AG04450 (cell line): ENCODE measurements at regions of chr16 and their contacts with region 1.

Region 1: DNA sequence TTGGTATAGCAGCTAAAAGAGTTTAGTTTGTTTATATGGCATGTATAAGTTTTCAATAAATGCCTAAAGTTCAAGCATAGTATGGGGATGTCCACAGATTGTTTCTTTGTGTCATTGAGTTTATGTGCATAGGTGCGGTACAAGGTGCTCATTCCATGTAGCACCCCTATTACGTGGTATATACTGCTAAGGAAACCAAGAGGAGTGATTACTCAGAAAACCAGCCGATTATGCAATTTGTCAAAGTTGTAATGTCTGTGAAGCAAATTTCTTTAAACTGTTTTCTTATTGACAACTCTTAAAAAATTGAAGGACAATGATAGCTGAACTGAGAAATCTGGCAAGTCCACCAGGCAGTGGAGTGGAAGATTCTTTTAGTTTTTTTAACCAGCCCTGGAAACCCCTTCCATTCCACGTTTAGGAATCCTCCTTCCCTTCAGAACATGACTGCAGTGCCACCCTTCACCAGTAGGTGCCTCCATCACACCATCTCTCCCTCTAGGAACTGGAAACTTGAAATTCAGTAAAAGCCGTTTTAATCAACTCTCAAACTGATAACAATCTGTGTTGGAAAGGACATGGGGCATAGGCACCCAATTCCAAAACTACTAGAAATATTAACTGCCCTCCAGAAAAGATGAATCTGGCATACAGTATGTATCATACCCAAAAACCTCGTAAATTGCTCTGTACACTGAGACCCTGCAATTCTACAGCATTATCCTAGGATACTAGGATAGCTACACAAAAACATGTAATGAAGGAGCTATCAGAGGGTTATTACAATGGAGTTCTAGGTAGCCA is 43.5 kb downstream of the REXO5 start:
- DNase-seq: peak; percentile 41
- H3K4me3 ChIP-seq: no peak overlapping the region
- H3K27ac ChIP-seq: no peak overlapping the region
- H3K27me3 ChIP-seq: no peaks in the 10 kb centered on the region
- CTCF ChIP-seq: peak; percentile 100

Region 2: GRCh38 chr16:20763461-20764232 is 86.1 kb before region 1 on chr16 and contains the start of gene ACSM3:
- CTCF ChIA-PET with region 1: no interaction called
- POLR2A ChIA-PET with region 1: no interaction called
- DNase-seq: peak; percentile 59
- H3K4me3 ChIP-seq: peak within 1 kb of the TSS; percentile 63
- H3K27ac ChIP-seq: no peak within 1 kb of the TSS
- H3K27me3 ChIP-seq: no peaks in the 10 kb centered on the region
- CTCF ChIP-seq: no peak
- polyA plus RNA-seq, gene ACSM3: 0.45 and 0.76 TPM in 2 replicates

Region 3: DNA sequence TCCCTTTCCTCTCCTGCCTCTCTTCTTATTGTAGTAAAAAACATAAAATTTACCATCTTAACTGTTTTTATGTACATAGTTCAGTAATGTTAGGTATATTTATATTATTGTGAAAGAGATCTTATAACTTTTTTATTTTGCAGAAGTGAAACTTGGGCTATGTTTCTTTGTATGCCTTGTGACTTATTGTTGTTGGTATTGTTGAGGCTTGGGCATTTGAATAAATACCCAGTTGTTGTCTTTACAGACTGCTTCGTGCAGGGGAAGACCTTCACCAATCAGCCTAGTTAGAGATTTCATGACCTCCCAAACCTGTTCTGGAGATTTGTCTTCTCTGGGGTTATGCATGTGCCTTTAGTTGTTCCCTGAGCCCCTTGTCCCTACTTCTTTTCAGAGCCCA is 11.5 kb before region 1 on chr16:
- CTCF ChIA-PET with region 1: interaction called, 10 read pairs
- POLR2A ChIA-PET with region 1: no interaction called
- DNase-seq: no peak
- H3K4me3 ChIP-seq: no peak overlapping the region
- H3K27ac ChIP-seq: no peak overlapping the region
- H3K27me3 ChIP-seq: no peaks in the 10 kb centered on the region
- CTCF ChIP-seq: no peak

Region 4: GRCh38 chr16:20900299-20901067 is 50.7 kb after region 1 on chr16 and contains the starts of genes DCUN1D3 and LYRM1:
- CTCF ChIA-PET with region 1: interaction called, 26 read pairs
- POLR2A ChIA-PET with region 1: interaction called, 13 read pairs
- DNase-seq: peak; percentile 99
- H3K4me3 ChIP-seq: peak within 1 kb of the TSS; percentile 95
- H3K27ac ChIP-seq: peak within 1 kb of the TSS; percentile 99
- H3K27me3 ChIP-seq: no peaks in the 10 kb centered on the region
- CTCF ChIP-seq: no peak
- polyA plus RNA-seq, gene DCUN1D3: 11.3 and 12.0 TPM in 2 replicates
- polyA plus RNA-seq, gene LYRM1: 32.3 and 41.1 TPM in 2 replicates

Region 5: GRCh38 chr16:21001262-21001661 is 151.5 kb after region 1 on chr16:
- CTCF ChIA-PET with region 1: interaction called, 21 read pairs
- POLR2A ChIA-PET with region 1: no interaction called
- DNase-seq: no peak
- H3K4me3 ChIP-seq: no peak overlapping the region
- H3K27ac ChIP-seq: no peak overlapping the region
- H3K27me3 ChIP-seq: peaks cover 2% of the 10 kb centered on the region
- CTCF ChIP-seq: peak; percentile 44

Region 6: GRCh38 chr16:21101631-21102420 is 252.0 kb after region 1 on chr16:
- CTCF ChIA-PET with region 1: interaction called, 31 read pairs
- POLR2A ChIA-PET with region 1: interaction called, 3 read pairs
- DNase-seq: no peak
- H3K4me3 ChIP-seq: no peak overlapping the region
- H3K27ac ChIP-seq: no peak overlapping the region
- H3K27me3 ChIP-seq: no peaks in the 10 kb centered on the region
- CTCF ChIP-seq: peak; percentile 43

Region 7: GRCh38 chr16:21190599-21190998 is 340.8 kb after region 1 on chr16:
- CTCF ChIA-PET with region 1: interaction called, 22 read pairs
- POLR2A ChIA-PET with region 1: interaction called, 3 read pairs
- DNase-seq: no peak
- H3K4me3 ChIP-seq: no peak overlapping the region
- H3K27ac ChIP-seq: no peak overlapping the region
- H3K27me3 ChIP-seq: peaks cover 7% of the 10 kb centered on the region
- CTCF ChIP-seq: no peak